Right ventricle myocardium inferior (tissue), 1 donor: ENCODE measurements at regions of chr10 and their contacts with region 1.

Region 1: GRCh38 chr10:102917962-102918816 is at the start of gene CNNM2:
- DNase-seq: peak; percentile 100
- ATAC-seq: peak; percentile 98
- total RNA-seq, gene CNNM2: 3.0 TPM

Region 2: GRCh38 chr10:102888048-102888447 is 30.1 kb before region 1 on chr10:
- intact Hi-C with region 1: no loop called
- DNase-seq: no peak
- ATAC-seq: no peak

Region 3: DNA sequence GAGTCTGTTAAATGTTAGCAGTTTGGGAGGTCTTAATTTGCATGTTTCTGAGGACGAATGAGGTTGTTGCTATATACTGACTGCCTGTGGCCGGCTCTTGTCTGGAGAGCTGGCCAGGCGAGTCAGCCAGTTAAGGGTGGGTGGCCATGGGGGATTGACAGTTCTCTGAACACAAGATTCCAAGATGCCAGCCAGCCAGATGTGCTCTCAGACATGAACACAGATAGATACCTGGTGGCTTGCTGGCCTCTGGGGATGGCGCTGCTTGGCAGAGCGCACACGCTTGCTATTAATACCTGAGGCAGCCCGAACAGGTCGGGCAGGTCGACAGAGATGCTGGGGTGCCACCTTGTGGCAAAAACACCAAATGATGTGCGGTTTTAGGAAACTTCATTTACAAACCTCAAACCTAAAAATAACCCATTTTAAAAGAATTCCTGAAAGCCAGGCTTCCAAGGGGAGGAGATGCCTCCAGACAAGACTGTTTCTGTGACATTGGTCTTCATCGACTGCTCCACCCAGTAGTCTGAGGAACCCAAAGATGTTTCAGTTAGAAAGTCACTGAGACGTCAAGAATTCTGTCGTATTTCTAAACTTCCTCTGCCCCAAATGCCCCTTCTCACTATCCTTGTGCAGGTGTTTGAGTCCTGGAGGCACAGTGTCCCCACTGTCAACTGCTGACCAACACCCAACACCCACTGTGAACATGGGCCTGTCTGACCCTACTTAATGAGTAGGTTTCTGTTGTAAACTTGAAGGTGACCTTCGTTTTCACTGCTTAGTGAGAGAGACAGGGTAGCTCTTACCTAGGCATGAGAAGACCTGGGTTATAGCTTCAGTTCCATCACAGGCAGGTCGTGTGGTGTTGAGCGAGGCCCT is 151.5 kb after region 1 on chr10:
- intact Hi-C with region 1: loop called (anchors 1 kb)
- DNase-seq: no peak
- ATAC-seq: peak; percentile 71

Region 4: DNA sequence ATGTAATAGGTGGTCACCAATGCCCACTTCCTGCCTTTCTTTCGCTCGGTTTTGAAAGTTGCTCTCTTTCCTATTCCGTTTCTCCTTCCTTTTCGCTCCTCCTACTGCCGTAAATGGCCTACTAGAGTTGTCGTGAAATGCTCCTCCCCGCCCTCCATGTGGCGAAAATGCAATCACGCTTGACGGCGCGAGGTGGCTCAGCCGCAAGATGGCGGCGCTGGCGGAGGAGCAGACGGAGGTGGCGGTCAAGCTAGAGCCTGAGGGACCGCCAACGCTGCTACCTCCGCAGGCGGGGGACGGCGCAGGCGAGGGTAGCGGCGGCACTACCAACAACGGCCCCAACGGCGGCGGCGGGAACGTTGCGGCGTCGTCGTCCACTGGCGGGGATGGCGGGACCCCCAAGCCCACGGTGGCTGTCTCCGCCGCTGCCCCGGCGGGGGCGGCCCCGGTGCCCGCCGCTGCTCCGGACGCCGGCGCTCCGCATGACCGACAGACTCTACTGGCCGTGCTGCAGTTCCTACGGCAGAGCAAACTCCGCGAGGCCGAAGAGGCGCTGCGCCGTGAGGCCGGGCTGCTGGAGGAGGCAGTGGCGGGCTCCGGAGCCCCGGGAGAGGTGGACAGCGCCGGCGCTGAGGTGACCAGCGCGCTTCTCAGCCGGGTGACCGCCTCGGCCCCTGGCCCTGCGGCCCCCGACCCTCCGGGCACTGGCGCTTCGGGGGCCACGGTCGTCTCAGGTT is 449.8 kb after region 1 on chr10 and contains the start of gene TAF5:
- intact Hi-C with region 1: loop called (anchors 10 kb)
- DNase-seq: peak; percentile 95
- ATAC-seq: peak; percentile 90
- total RNA-seq, gene TAF5: 3.1 TPM